GM12878 (cell line): ENCODE measurements at regions of chr21 and their contacts with region 1.

Region 1: DNA sequence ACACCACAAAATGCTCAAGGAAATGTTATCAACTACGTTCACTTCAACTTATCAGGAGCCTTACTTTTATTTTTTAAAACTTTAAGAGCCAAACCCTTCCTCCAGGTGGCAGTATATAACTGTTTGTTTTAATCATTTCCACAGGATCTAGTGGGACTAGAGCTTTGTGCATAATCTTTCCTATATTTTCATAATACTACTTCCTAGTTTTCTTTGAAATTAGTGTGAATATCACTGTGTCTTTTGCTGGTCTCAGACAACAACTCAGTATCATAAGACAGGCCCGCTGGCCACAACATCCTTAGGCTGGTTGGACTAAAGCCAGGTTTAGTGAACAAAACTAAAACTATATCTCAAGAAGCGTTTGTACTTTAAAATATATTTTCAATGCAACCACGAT is 145.5 kb downstream of the TIAM1 start:
- DNase-seq: no peak
- ATAC-seq: peak; percentile 28; the same call in 1 of the 3 replicates
- H3K4me3 ChIP-seq: no peak overlapping the region
- H3K27ac ChIP-seq: no peak overlapping the region
- H3K4me1 ChIP-seq: no peaks in the 10 kb centered on the region
- H3K27me3 ChIP-seq: no peaks in the 10 kb centered on the region
- CTCF ChIP-seq: peak; percentile 35 to 58 (median 42); a peak in 5 of 6 replicates
- EP300 ChIP-seq: no peak
- POLR2A ChIP-seq: no peak
- RAD21 ChIP-seq: peak; percentile 64

Region 2: DNA sequence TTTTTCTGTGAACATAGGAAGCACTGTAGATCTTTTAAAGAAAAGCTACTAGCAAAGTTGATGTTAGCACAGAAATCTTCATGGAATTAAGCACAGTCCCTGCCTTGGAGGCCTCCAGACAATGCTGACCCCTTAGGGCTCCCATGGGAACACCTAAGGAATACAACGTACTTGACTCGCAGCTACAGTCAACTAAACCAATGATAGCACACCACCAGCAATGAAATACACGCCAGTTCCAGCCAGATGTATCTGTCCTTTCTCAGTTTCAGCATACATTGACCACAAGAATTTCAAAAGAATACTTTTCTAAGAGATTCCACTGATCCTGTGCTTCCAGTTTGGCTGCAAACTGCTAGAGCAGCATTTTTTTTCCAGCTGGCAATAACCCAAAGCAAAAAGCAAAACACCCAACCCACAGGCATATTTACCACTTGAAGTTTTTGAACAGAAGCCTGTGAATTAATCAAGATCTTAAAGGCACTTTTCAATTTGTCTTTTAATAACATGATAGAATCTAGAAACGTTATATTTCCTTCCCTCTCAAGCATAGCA is 274.4 kb before region 1 on chr21:
- CTCF ChIA-PET with region 1: no interaction called
- POLR2A ChIA-PET with region 1: no interaction called
- RAD21 ChIA-PET with region 1: no interaction called
- SMC1A ChIA-PET with region 1: no interaction called
- in situ Hi-C with region 1: no loop called
- intact Hi-C with region 1: no loop called
- DNase-seq: no peak
- ATAC-seq: no peak
- H3K4me3 ChIP-seq: no peak overlapping the region
- H3K27ac ChIP-seq: no peak overlapping the region
- H3K4me1 ChIP-seq: no peaks in the 10 kb centered on the region
- H3K27me3 ChIP-seq: no peaks in the 10 kb centered on the region
- CTCF ChIP-seq: no peak
- EP300 ChIP-seq: no peak
- POLR2A ChIP-seq: no peak
- RAD21 ChIP-seq: no peak

Region 3: DNA sequence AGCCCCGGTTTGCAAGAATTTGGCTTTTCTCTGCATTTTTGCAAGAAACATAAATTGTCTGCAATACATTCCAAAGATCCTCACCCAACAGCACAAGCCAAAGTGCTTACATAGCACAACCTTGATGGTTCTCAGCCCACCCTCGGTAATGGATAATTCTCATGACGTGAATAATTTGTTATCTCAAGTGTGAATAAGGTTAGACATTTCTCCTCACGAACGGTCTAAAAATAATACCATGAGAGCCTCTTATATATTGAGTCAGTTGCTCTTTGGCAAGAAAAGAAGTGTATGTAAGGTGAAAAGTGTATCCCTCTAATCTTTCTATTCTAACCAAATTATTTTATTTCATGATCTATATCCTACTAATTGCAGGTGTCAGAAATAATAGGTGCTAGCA is 193.6 kb before region 1 on chr21:
- CTCF ChIA-PET with region 1: no interaction called
- POLR2A ChIA-PET with region 1: no interaction called
- RAD21 ChIA-PET with region 1: no interaction called
- SMC1A ChIA-PET with region 1: no interaction called
- in situ Hi-C with region 1: no loop called
- intact Hi-C with region 1: no loop called
- DNase-seq: no peak
- ATAC-seq: no peak
- H3K4me3 ChIP-seq: no peak overlapping the region
- H3K27ac ChIP-seq: no peak overlapping the region
- H3K4me1 ChIP-seq: no peaks in the 10 kb centered on the region
- H3K27me3 ChIP-seq: no peaks in the 10 kb centered on the region
- CTCF ChIP-seq: no peak
- EP300 ChIP-seq: no peak
- POLR2A ChIP-seq: no peak
- RAD21 ChIP-seq: no peak

Region 4: GRCh38 chr21:31180256-31181081 is 18.1 kb before region 1 on chr21:
- CTCF ChIA-PET with region 1: interaction called, 20 read pairs
- POLR2A ChIA-PET with region 1: no interaction called
- RAD21 ChIA-PET with region 1: interaction called, 3 read pairs
- SMC1A ChIA-PET with region 1: interaction called, 13 read pairs
- in situ Hi-C with region 1: no loop called
- intact Hi-C with region 1: no loop called
- DNase-seq: no peak
- ATAC-seq: peak; percentile 65
- H3K4me3 ChIP-seq: no peak overlapping the region
- H3K27ac ChIP-seq: no peak overlapping the region
- H3K4me1 ChIP-seq: no peaks in the 10 kb centered on the region
- H3K27me3 ChIP-seq: no peaks in the 10 kb centered on the region
- CTCF ChIP-seq: peak; percentile 21 to 52 (median 43); a peak in 5 of 6 replicates
- EP300 ChIP-seq: no peak
- POLR2A ChIP-seq: no peak
- RAD21 ChIP-seq: peak; percentile 41; the same call in 1 of the 2 replicates

Region 5: GRCh38 chr21:31326522-31327242 is 128.1 kb after region 1 on chr21:
- CTCF ChIA-PET with region 1: interaction called, 10 read pairs
- POLR2A ChIA-PET with region 1: interaction called, 3 read pairs
- RAD21 ChIA-PET with region 1: interaction called, 8 read pairs
- SMC1A ChIA-PET with region 1: interaction called, 16 read pairs
- in situ Hi-C with region 1: no loop called
- intact Hi-C with region 1: loop called (anchors 2 kb)
- DNase-seq: peak; percentile 95
- ATAC-seq: peak; percentile 96
- H3K4me3 ChIP-seq: 0 out of 2 replicates have a peak overlapping the region, but pooled peaks have one; percentile 15
- H3K27ac ChIP-seq: peak overlapping the region; percentile 41
- H3K4me1 ChIP-seq: peaks cover 3% of the 10 kb centered on the region; the same call in 1 of the 2 replicates
- H3K27me3 ChIP-seq: no peaks in the 10 kb centered on the region
- CTCF ChIP-seq: no peak
- EP300 ChIP-seq: peak; percentile 75 to 89; a peak in 3 of 4 replicates
- POLR2A ChIP-seq: no peak
- RAD21 ChIP-seq: no peak

Region 6: GRCh38 chr21:31509194-31510017 is 310.8 kb after region 1 on chr21:
- CTCF ChIA-PET with region 1: interaction called, 4 read pairs
- POLR2A ChIA-PET with region 1: no interaction called
- RAD21 ChIA-PET with region 1: interaction called, 4 read pairs
- SMC1A ChIA-PET with region 1: interaction called, 5 read pairs
- in situ Hi-C with region 1: no loop called
- intact Hi-C with region 1: loop called (anchors 5 kb)
- DNase-seq: peak; percentile 41
- ATAC-seq: peak; percentile 70
- H3K4me3 ChIP-seq: no peak overlapping the region
- H3K27ac ChIP-seq: no peak overlapping the region; the same call in 1 of the 2 replicates
- H3K4me1 ChIP-seq: peaks cover 25% of the 10 kb centered on the region
- H3K27me3 ChIP-seq: no peaks in the 10 kb centered on the region
- CTCF ChIP-seq: peak; percentile 33 to 47 (median 39); a peak in 4 of 6 replicates
- EP300 ChIP-seq: peak; percentile 14 to 59; a peak in 2 of 4 replicates
- POLR2A ChIP-seq: no peak
- RAD21 ChIP-seq: no peak

Region 7: DNA sequence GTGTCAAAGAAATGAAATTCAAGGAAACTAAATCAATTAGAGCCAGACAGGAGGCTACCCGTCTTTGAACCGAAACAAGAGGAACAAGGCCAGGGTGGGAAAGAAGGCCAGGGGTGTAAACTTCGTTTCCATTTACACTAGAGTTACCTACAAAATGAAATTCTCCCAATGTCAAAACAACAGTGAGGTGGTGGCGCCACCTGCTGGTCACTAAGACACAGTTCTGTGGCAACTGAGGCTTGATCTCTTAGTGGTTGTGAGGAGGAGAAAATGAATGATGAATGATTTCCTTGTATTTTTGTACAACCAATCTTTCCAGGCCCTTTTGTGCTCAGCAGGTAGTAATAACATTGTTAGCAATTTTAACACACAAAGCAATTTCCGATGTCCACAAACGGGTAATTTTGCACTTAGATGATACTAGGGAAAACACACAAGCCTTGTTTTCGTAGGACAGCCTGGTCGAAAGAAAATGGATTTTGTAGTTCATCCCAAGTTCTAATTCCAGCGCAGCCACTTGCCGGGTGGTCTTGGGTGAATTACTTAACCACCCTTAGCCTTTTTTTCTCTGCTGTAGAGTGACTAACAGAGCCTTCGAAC is 406.1 kb after region 1 on chr21:
- CTCF ChIA-PET with region 1: interaction called, 14 read pairs
- POLR2A ChIA-PET with region 1: no interaction called
- RAD21 ChIA-PET with region 1: interaction called, 6 read pairs
- SMC1A ChIA-PET with region 1: interaction called, 5 read pairs
- in situ Hi-C with region 1: no loop called
- intact Hi-C with region 1: loop called (anchors 1 kb)
- DNase-seq: peak; percentile 19
- ATAC-seq: peak; percentile 94
- H3K4me3 ChIP-seq: no peak overlapping the region
- H3K27ac ChIP-seq: no peak overlapping the region
- H3K4me1 ChIP-seq: no peaks in the 10 kb centered on the region
- H3K27me3 ChIP-seq: no peaks in the 10 kb centered on the region
- CTCF ChIP-seq: peak; percentile 74 to 87 (median 85)
- EP300 ChIP-seq: no peak
- POLR2A ChIP-seq: no peak
- RAD21 ChIP-seq: peak; percentile 87

Region 8: DNA sequence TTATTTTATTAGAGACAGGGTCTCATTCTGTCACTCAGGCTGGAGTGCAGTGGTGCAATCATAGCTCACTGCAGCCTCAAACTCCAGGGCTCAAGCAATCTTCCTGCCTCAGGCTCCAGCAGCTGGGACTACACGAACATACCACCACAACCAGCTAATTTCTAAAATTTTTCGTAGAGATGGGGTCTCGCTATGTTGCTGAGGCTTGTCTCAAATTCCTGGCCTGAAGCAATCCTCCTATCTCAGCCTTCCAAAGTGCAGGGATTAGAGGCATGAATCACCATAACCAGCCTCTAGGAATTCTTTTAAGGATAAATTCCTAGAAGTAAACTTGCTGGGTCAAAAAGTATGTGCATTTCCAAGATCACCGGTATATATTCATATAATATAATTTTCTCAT is 656.6 kb after region 1 on chr21:
- CTCF ChIA-PET with region 1: no interaction called
- POLR2A ChIA-PET with region 1: no interaction called
- RAD21 ChIA-PET with region 1: no interaction called
- SMC1A ChIA-PET with region 1: no interaction called
- in situ Hi-C with region 1: no loop called
- intact Hi-C with region 1: no loop called
- DNase-seq: no peak
- ATAC-seq: no peak
- H3K4me3 ChIP-seq: no peak overlapping the region
- H3K27ac ChIP-seq: no peak overlapping the region
- H3K4me1 ChIP-seq: no peaks in the 10 kb centered on the region
- H3K27me3 ChIP-seq: no peaks in the 10 kb centered on the region
- CTCF ChIP-seq: no peak
- EP300 ChIP-seq: no peak
- POLR2A ChIP-seq: no peak
- RAD21 ChIP-seq: no peak